SK-N-SH (cell line): ENCODE measurements at regions of chr20 and their contacts with region 1.

Region 1: DNA sequence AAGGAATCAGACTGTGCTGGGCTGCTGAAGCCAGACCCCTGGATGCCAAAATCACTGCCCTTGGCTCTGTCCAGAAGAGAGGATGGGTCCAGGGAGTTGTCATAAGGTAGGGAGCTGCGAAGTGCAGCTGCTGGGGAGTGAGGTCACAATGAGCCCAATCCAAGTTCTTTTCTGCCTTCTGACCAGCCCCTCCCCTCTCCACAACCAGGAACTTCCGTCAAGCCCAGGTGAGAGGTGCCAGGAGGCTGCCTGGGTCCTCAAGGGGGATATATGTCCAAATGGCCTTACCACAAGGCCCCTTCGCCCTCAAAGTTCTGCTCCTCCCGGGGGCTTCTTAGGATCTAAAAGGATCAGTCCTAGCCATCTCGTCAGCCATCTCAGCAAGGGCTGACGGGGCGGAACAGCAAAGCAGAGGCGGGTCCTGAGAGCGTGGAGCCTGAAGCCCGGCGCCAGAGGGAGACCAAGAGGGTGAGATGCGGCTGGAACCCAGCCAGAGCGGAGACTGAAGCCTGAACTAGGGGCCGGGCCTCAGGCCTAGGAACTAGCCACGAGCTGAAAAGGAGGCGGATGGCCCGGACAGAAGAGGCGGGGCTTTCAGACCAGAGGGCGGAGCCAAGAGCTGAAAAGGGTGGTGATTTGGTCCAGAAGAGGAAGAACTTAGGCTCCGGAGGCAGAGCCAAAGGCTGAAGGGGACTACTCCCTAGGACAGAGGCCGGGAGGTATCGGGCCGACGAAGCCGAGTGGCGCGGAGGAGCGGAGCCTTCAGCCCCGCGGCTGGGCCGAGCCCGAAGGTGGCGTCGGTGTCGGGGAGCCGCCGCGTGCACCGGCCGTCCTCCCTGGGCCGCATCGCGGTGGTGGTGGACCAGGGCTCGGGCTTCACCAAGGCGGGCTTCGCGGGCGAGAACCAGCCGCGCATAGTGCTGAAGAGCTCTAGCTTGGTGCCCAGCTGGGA is at the start of gene ACTL10:
- DNase-seq: peak; percentile 94
- H3K4me3 ChIP-seq: peak within 1 kb of the TSS; percentile 41 to 52; a peak in 3 of 4 replicates
- H3K27ac ChIP-seq: peak within 1 kb of the TSS; percentile 55 to 87; a peak in 3 of 4 replicates
- H3K4me1 ChIP-seq: peaks cover 0 to 41% of the 10 kb centered on the region in 2 experiments; a peak in 1 of 4 replicates
- H3K27me3 ChIP-seq: no peaks in the 10 kb centered on the region
- CTCF ChIP-seq: peak; percentile 35
- EP300 ChIP-seq: no peak; a peak in 1 of 4 replicates
- RAD21 ChIP-seq: 0 out of 2 replicates have a peak, but pooled peaks have one; percentile 8
- polyA plus RNA-seq, gene ACTL10: 0.19 and 0.25 TPM in 2 replicates

Region 2: DNA sequence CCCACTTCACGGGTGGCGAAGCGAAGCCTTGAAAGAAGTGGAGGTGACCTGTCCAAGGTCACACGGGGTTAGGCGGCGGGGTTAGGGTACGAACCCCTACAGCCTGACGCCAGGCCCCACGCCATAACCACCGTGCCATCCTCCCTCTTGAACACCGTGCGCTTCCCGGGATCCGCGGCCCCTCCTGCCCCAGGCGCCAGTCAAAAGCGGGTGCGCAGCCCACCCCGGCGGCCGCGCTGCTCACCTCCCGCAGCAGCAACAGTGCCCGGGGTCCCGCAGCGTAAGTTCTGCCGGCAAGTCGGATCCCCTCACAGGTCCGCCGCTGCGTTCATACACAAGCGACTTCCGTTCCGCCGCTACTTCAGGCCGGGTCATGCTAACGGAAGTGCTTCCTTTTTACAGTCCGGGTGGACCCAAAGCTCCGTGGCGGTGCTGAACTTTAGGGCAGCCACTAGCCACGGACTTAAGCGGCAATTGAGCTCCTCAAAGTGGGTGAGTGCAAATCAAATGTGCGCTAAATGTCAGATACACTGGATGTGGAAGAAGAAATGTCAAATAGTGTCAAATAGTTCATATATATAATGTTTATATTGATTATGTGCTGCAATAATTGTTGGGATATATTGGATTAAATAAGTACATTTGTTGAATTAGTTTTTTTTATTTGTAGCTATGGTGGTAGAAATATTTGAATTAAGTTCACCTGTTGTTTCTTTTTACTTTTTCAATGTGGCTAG is 265.2 kb before region 1 on chr20 and contains the start of gene CDK5RAP1:
- CTCF ChIA-PET with region 1: interaction called, 11 read pairs
- POLR2A ChIA-PET with region 1: interaction called, 8 read pairs
- DNase-seq: peak; percentile 91
- H3K4me3 ChIP-seq: peak within 1 kb of the TSS; percentile 79 to 92
- H3K27ac ChIP-seq: peak within 1 kb of the TSS; percentile 41 to 44; a peak in 2 of 4 replicates
- H3K4me1 ChIP-seq: peaks cover 7 to 15% of the 10 kb centered on the region in 2 experiments; a peak in 2 of 4 replicates
- H3K27me3 ChIP-seq: no peaks in the 10 kb centered on the region
- CTCF ChIP-seq: no peak
- EP300 ChIP-seq: no peak
- RAD21 ChIP-seq: no peak; the same call in 1 of the 2 replicates
- polyA plus RNA-seq, gene CDK5RAP1: 30.5 and 33.2 TPM in 2 replicates

Region 3: DNA sequence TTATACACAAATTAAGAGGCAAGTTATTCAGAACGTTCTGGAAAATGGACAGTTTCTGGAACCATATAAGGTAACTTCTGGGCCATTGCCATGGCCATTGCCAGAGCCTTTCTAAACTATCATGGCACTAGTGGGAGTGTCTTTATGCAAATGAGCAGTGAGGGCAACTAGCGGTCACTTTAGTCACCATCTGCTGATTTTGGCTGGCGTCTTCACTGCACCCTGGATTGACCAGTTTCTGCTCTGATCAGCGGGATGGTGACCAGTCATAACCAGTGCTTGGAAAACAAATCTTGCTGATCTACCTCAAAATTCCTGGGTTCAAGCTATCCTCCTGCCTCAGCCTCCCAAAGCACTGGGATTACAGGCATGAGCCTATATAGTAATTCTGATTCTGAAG is 215.7 kb before region 1 on chr20:
- CTCF ChIA-PET with region 1: interaction called, 32 read pairs
- POLR2A ChIA-PET with region 1: interaction called, 3 read pairs
- DNase-seq: no peak
- H3K4me3 ChIP-seq: no peak overlapping the region
- H3K27ac ChIP-seq: no peak overlapping the region
- H3K4me1 ChIP-seq: no peaks in the 10 kb centered on the region; a peak in 1 of 4 replicates
- H3K27me3 ChIP-seq: no peaks in the 10 kb centered on the region
- CTCF ChIP-seq: no peak
- EP300 ChIP-seq: no peak
- RAD21 ChIP-seq: no peak

Region 4: GRCh38 chr20:33611106-33611505 is 55.5 kb before region 1 on chr20:
- CTCF ChIA-PET with region 1: no interaction called
- POLR2A ChIA-PET with region 1: no interaction called
- DNase-seq: no peak
- H3K4me3 ChIP-seq: no peak overlapping the region
- H3K27ac ChIP-seq: peak overlapping the region in 1 of 2 experiments; percentile 57; a peak in 2 of 4 replicates
- H3K4me1 ChIP-seq: peaks cover 0 to 11% of the 10 kb centered on the region in 2 experiments; a peak in 2 of 4 replicates
- H3K27me3 ChIP-seq: no peaks in the 10 kb centered on the region
- CTCF ChIP-seq: no peak
- EP300 ChIP-seq: no peak
- RAD21 ChIP-seq: no peak

Region 5: DNA sequence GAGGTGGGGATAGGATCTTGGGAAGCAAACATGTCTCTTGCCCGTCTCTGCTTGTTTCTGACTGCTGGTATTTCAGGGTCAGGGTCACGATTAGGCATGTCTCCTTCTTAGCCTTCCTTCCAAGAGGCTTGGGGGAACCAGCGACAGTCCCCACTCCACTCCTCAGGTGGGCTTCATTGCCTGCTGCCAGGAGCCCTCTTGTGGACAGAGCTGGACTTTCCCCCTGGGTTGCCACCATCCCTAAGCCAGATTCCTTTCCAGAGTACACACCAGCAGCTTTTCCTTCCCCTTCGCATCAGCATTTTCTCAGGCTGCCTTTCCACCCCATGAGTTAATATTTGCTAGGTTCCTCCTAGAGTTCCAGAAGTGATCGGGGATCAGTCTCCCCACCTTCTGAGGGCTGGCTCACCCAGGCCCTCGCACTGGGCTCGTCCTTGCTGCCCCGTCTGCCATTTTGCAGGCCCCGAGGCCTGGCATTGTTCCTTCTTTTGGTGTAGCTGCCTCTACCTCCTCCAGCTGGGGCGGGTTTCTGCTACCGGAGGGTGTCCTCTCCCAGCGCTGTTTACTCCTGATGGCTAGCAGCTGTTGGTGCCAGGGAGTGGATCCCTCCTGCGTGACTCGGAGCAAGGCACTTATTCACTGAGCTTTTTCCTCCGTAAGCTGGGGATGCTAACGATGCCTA is 13.2 kb before region 1 on chr20:
- CTCF ChIA-PET with region 1: interaction called, 114 read pairs
- POLR2A ChIA-PET with region 1: interaction called, 17 read pairs
- DNase-seq: peak; percentile 88
- H3K4me3 ChIP-seq: peak overlapping the region in 1 of 2 experiments; percentile 23; a peak in 1 of 4 replicates
- H3K27ac ChIP-seq: peak overlapping the region in 1 of 2 experiments; percentile 17; a peak in 1 of 4 replicates
- H3K4me1 ChIP-seq: peaks cover 1 to 39% of the 10 kb centered on the region in 2 experiments; a peak in 2 of 4 replicates
- H3K27me3 ChIP-seq: no peaks in the 10 kb centered on the region
- CTCF ChIP-seq: peak; percentile 82
- EP300 ChIP-seq: no peak
- RAD21 ChIP-seq: peak; percentile 96

Region 6: GRCh38 chr20:33686100-33686983 is 19.8 kb after region 1 on chr20 and contains the start of gene E2F1:
- CTCF ChIA-PET with region 1: interaction called, 34 read pairs
- POLR2A ChIA-PET with region 1: interaction called, 4 read pairs
- DNase-seq: peak; percentile 99
- H3K4me3 ChIP-seq: peak within 1 kb of the TSS; percentile 61 to 62
- H3K27ac ChIP-seq: peak within 1 kb of the TSS; percentile 1 to 24; a peak in 2 of 4 replicates
- H3K4me1 ChIP-seq: peaks cover 7 to 19% of the 10 kb centered on the region in 2 experiments; a peak in 2 of 4 replicates
- H3K27me3 ChIP-seq: no peaks in the 10 kb centered on the region
- CTCF ChIP-seq: peak; percentile 34
- EP300 ChIP-seq: no peak
- RAD21 ChIP-seq: no peak
- polyA plus RNA-seq, gene E2F1: 12.4 and 15.0 TPM in 2 replicates